ENCODE measurements at regions of chr3 and their contacts with region 1.

Region 1: GRCh38 chr3:57007513-57008460 is 52.7 kb upstream of the SPATA12 start:
- DNase-seq: peak in 3 of 5 donors; percentile 56 to 75 (median 75)
- ATAC-seq: peak; percentile 59 to 90 (median 86)
- H3K4me3 ChIP-seq: peak overlapping the region in 3 of 12 donors; percentile 3 to 25 (median 22)
- H3K27ac ChIP-seq: peak overlapping the region in 11 of 12 donors; percentile 9 to 85 (median 57)
- H3K4me1 ChIP-seq: peaks cover 0 to 30% (median 17%) of the 10 kb centered on the region in 12 donors
- H3K27me3 ChIP-seq: no peaks in the 10 kb centered on the region
- CTCF ChIP-seq: no peak
- POLR2A ChIP-seq: no peak

Region 2: DNA sequence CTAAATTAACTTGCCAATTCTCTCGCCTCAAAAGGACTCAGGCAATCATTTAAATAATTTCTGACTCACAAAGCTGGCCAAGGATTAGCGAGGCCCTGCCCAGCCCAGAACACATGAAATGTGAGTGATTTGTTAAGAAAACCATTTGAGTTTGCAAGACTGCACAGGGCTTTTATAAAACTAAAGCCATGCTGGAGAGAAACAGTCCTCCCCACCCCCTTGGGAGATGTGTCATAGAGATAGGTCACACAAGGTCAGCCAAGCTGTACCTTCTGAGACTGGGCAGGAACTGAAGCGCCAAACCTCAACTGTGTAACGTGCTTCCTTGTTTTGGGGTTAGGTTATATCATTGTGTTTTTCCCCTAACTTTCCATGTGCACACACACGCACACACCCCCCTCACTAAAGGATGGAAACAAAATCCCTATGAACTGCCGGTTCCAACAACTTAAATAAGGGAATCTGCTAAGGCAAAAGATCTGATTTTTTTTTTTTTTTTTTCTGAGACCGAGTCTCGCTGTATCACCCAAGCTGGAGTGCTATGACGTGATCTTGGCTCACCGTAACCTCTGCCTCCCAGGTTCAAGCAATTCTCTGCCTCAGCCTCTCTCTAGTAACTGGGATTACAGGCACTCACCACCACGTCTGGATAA is 60.8 kb after region 1 on chr3:
- intact Hi-C with region 1: loop called in 3 of 10 experiments (anchors 5 to 10 kb)
- DNase-seq: peak in 4 of 5 donors; percentile 22 to 58 (median 44)
- ATAC-seq: peak; percentile 73 to 93 (median 90)
- H3K4me3 ChIP-seq: no peak overlapping the region
- H3K27ac ChIP-seq: peak overlapping the region in 11 of 12 donors; percentile 9 to 77 (median 55)
- H3K4me1 ChIP-seq: peaks cover 0 to 22% (median 9%) of the 10 kb centered on the region in 12 donors
- H3K27me3 ChIP-seq: no peaks in the 10 kb centered on the region
- CTCF ChIP-seq: no peak
- POLR2A ChIP-seq: no peak

Region 3: GRCh38 chr3:57078344-57078634 is 70.5 kb after region 1 on chr3:
- intact Hi-C with region 1: loop called in 2 of 10 experiments (anchors 5 kb)
- DNase-seq: peak; percentile 41 to 74 (median 46)
- ATAC-seq: peak; percentile 24 to 61 (median 57)
- H3K4me3 ChIP-seq: peak overlapping the region; percentile 36 to 93 (median 74)
- H3K27ac ChIP-seq: peak overlapping the region in 4 of 12 donors; percentile 30 to 79 (median 43)
- H3K4me1 ChIP-seq: peaks cover 0 to 18% (median 4%) of the 10 kb centered on the region in 12 donors
- H3K27me3 ChIP-seq: peaks cover 0 to 21% (median 0%) of the 10 kb centered on the region in 9 donors
- CTCF ChIP-seq: no peak
- POLR2A ChIP-seq: no peak

Measured in heart left ventricle (tissue), 16 donors.